PC-3 (cell line): ENCODE measurements at regions of chr1 and their contacts with region 1.

Region 1: DNA sequence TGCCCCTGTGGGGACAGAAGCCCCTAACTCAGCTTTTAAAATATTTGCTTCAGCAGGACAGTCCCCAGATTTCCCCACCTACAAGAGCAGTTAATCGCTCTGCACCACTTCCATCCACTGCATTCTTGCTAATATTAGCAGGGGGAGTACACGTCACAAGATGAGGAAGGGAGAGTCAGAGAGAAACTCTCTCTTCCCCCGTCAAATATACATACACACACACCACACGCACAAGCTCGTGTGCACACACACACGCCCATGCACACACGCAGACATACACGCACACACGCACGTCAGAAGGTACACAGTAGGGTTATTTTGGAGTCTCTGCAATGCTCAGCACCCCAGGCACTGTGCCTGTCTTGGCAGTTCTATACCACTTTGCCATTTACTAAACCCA is 2.1 kb downstream of the CLCA1 start:
- DNase-seq: no peak
- ATAC-seq: no peak
- H3K4me3 ChIP-seq: no peak overlapping the region
- H3K27ac ChIP-seq: no peak overlapping the region
- H3K4me1 ChIP-seq: no peaks in the 10 kb centered on the region
- H3K27me3 ChIP-seq: no peaks in the 10 kb centered on the region
- CTCF ChIP-seq: no peak

Region 2: DNA sequence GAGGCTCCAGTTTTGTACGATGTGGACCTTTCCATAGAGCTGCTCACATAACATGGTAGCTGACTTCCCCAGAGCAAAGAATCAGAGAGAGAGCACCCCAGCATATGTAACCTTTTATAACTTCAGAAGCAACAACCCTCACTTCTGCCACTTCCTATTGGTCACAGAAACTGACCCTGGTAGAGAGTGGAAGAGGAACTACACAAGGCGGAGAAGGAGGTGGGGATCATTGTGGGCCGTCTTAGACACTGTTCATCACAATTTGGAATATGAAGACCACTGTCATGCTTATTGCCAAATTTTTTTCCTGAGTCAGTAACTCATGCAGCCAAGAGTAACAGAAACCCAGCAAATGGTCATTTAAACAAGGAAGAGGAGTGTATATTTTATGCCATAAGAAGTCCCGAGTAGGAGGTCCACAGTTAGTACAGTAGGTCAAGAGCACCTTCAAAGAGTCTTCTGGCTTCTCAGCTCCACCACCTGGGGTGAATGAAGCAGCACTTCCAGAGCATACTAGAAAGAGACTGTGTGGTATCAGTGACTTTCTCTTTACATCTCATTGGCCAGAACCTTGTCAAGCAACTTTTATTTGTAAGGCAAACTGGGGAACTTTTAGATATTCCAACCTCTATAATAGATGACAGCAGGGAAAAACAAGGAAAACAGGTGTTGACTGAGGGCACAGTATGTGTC is 146.6 kb before region 1 on chr1:
- CTCF ChIA-PET with region 1: no interaction called
- POLR2A ChIA-PET with region 1: no interaction called
- intact Hi-C with region 1: no loop called
- DNase-seq: no peak
- ATAC-seq: no peak
- H3K4me3 ChIP-seq: no peak overlapping the region
- H3K27ac ChIP-seq: no peak overlapping the region
- H3K4me1 ChIP-seq: no peaks in the 10 kb centered on the region
- H3K27me3 ChIP-seq: peaks cover 49% of the 10 kb centered on the region
- CTCF ChIP-seq: no peak

Region 3: DNA sequence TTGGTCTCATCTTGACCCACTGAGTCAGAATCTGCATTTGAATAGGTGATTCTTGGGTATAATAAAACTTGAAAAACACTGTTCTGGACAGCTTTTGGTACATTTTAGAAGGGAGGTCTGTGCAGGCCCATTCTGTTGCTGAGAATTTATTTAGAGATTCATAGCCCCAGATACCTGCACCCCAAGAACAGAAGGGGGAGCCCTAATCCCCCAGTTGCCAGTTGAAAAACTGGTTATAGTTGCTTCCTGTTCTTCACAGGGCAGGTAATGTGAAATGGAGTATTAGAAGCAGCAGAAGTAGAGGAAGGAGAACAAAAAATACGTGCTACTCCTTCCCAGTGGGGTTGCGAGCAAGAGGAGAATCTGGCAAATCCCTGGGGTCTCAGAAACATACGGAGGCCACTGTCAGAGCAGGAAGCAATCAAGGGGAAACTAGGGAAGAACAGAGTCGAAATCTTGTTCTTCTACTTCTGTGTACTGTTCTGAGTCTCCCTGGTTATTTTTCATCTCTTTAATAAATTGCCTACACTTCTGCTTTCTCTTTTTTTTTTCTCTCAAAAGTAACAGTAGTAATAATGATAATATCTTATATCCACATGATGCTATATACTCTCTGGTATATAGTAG is 51.5 kb before region 1 on chr1:
- CTCF ChIA-PET with region 1: no interaction called
- POLR2A ChIA-PET with region 1: no interaction called
- intact Hi-C with region 1: loop called (anchors 1 kb)
- DNase-seq: peak; percentile 64
- ATAC-seq: peak; percentile 37
- H3K4me3 ChIP-seq: no peak overlapping the region
- H3K27ac ChIP-seq: no peak overlapping the region
- H3K4me1 ChIP-seq: peaks cover 40% of the 10 kb centered on the region
- H3K27me3 ChIP-seq: no peaks in the 10 kb centered on the region
- CTCF ChIP-seq: peak; percentile 75